ENCODE measurements at regions of chr21 and their contacts with region 1.

Region 1: GRCh38 chr21:39349211-39350093 is 564 bp upstream of the HMGN1 start:
- DNase-seq: peak; percentile 98
- H3K4me3 Mint-ChIP-seq: peak overlapping the region; percentile 98
- H3K27ac Mint-ChIP-seq: peak overlapping the region; percentile 99
- H3K4me1 Mint-ChIP-seq: peaks cover 37% of the 10 kb centered on the region
- H3K27me3 Mint-ChIP-seq: peaks cover 6% of the 10 kb centered on the region

Region 2: DNA sequence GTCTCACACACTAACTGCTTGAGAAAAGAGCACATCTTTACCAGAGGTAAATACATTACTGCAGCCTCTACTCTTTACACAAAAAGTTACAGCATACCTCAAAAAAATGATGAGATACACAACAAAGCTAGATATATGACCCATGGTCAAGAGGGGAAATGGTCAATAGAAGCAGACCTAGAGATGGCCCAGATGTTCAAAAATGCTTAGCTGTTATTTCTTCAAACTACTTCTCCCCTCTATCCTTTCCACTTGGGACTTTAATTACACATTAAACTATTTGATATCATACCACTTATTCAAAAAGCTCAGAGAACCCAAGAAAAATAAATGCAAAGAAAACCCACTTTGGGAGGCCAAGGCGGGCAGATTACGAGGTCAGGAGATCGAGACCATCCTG is 48.9 kb before region 1 on chr21:
- CTCF ChIA-PET with region 1: no interaction called
- POLR2A ChIA-PET with region 1: no interaction called
- DNase-seq: no peak
- H3K4me3 Mint-ChIP-seq: no peak overlapping the region
- H3K27ac Mint-ChIP-seq: no peak overlapping the region
- H3K4me1 Mint-ChIP-seq: peaks cover 13% of the 10 kb centered on the region
- H3K27me3 Mint-ChIP-seq: no peaks in the 10 kb centered on the region

Region 3: DNA sequence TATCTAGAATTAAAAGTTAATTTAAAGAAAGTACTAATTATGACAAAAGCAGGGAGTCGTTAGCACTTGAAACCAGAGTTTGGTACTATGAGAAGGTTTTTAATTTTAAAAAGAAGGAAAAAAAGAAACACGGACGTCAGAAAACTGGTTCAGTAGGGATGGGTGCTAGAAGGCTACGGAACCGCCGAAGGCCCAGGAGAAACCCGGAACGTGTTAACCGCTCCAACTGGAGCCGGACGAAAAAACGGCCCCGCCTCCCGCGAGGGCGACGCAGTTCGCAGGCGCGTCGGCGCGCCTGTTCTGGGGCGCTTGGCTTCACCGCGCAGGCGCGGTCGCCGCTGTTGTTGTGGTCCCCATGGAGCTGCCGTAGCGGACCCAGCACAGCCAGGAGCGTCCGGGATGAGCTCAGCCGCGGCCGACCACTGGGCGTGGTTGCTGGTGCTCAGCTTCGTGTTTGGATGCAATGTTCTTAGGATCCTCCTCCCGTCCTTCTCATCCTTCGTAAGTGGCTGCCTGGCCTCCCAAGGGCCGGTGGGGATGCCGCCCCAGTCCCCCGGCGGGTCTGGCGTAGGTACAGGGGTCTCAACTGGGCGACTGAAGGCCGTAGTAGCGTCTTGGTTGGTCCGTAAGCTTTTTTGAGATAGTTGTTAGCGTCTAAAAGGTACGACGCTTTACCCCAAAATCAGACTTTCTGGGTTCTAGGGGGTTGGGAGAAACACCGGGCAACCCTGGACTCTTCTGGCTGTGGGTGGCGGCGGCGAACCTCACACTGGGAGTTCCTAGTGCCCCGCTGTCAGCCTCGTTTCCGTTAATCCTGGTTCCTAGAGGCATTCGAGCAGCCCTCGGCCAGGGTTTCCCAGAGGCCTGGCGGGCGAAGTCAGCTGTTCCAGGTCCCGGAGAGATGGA is 30.8 kb after region 1 on chr21:
- CTCF ChIA-PET with region 1: interaction called, 4 read pairs
- POLR2A ChIA-PET with region 1: interaction called, 54 read pairs
- DNase-seq: peak; percentile 94
- H3K4me3 Mint-ChIP-seq: peak overlapping the region; percentile 94
- H3K27ac Mint-ChIP-seq: peak overlapping the region; percentile 83
- H3K4me1 Mint-ChIP-seq: peaks cover 33% of the 10 kb centered on the region
- H3K27me3 Mint-ChIP-seq: peaks cover 2% of the 10 kb centered on the region

Region 4: DNA sequence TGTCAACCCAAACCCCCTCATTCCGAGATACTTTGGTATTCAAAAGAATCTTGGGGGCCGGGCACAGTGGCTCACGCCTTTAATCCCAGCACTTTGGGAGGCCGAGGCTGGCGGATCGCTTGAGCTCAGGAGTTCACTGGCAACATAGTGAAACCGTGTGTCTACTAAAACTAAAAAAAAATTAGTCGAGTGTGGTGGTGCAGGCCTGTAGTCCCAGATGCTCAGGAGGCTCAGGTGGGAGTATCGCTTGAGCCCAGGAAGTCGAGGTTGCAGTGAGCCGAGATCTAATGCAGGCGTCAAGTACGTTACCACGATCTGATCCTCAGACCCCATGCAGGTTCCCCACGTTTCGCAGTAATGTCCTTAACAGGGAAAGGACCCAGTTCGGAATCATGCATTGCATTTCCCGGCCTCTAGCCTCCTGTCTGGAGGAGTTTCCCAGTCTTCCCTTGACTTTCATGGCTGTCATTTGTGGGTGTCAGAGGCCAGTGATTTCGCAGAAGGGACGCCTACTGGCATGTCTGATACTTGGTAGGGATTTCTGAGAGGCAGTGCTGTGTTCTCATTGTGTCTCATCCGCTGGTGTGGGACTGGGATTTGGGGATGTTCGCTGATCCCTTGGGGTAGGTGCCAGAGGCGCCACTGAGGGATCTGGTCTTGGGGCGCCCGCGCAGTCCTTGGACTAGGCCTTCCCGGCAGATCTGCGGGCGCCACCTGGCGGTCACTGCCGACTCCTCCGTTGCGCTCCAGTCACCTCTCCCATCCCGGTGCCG is 38.8 kb after region 1 on chr21:
- CTCF ChIA-PET with region 1: interaction called, 20 read pairs
- POLR2A ChIA-PET with region 1: interaction called, 43 read pairs
- DNase-seq: peak; percentile 88
- H3K4me3 Mint-ChIP-seq: peak overlapping the region; percentile 83
- H3K27ac Mint-ChIP-seq: peak overlapping the region; percentile 82
- H3K4me1 Mint-ChIP-seq: peaks cover 45% of the 10 kb centered on the region
- H3K27me3 Mint-ChIP-seq: no peaks in the 10 kb centered on the region